ENCODE measurements at regions of chr2 and their contacts with region 1.

Region 1: GRCh38 chr2:68196120-68196716 is 38.5 kb downstream of the PNO1 start:
- DNase-seq: peak; percentile 52
- H3K4me3 Mint-ChIP-seq: no peak overlapping the region
- H3K27ac Mint-ChIP-seq: no peak overlapping the region
- H3K4me1 Mint-ChIP-seq: peaks cover 51% of the 10 kb centered on the region
- H3K27me3 Mint-ChIP-seq: no peaks in the 10 kb centered on the region

Region 2: GRCh38 chr2:66515743-66516142 is 1680.5 kb before region 1 on chr2:
- CTCF ChIA-PET with region 1: no interaction called
- intact Hi-C with region 1: no loop called
- DNase-seq: no peak
- H3K4me3 Mint-ChIP-seq: no peak overlapping the region
- H3K27ac Mint-ChIP-seq: no peak overlapping the region
- H3K4me1 Mint-ChIP-seq: no peaks in the 10 kb centered on the region
- H3K27me3 Mint-ChIP-seq: no peaks in the 10 kb centered on the region

Region 3: GRCh38 chr2:68185541-68186164 is 10.6 kb before region 1 on chr2:
- CTCF ChIA-PET with region 1: interaction called, 20 read pairs
- intact Hi-C with region 1: no loop called
- DNase-seq: peak; percentile 67
- H3K4me3 Mint-ChIP-seq: no peak overlapping the region
- H3K27ac Mint-ChIP-seq: no peak overlapping the region
- H3K4me1 Mint-ChIP-seq: peaks cover 32% of the 10 kb centered on the region
- H3K27me3 Mint-ChIP-seq: no peaks in the 10 kb centered on the region

Region 4: GRCh38 chr2:68225119-68225632 is 29.0 kb after region 1 on chr2:
- CTCF ChIA-PET with region 1: interaction called, 8 read pairs
- intact Hi-C with region 1: loop called (anchors 2 kb)
- DNase-seq: peak; percentile 28
- H3K4me3 Mint-ChIP-seq: no peak overlapping the region
- H3K27ac Mint-ChIP-seq: no peak overlapping the region
- H3K4me1 Mint-ChIP-seq: peaks cover 81% of the 10 kb centered on the region
- H3K27me3 Mint-ChIP-seq: no peaks in the 10 kb centered on the region

Region 5: DNA sequence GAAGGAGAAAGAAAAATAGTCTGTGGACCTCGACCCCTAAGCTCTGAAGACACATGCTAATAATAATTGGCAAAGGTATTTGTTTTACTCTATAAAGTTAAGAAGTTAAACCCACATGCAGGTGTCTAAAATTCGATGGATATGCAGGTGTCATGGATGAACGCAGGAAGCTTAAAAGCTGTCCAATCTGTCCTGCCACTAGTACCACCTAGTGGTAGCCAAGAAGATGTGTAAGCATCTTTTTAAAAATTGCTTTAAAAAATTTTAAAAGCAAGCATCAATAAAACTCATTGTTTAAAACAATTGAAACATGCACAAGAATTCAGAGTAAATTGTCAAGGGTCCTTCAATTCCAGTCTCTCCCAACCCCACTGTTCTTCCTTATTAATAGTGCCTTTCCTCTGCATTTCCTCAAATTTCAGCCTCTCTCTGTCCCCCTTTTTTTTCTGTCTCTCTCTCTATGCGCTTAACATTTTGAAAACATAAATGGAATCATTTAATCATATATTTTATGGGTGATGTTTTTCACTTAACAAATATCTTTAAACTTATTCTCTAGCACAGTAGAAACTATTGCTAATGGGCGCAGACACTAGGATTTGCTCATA is 86.7 kb after region 1 on chr2:
- CTCF ChIA-PET with region 1: interaction called, 16 read pairs
- intact Hi-C with region 1: loop called (anchors 1 kb)
- DNase-seq: peak; percentile 18
- H3K4me3 Mint-ChIP-seq: no peak overlapping the region
- H3K27ac Mint-ChIP-seq: no peak overlapping the region
- H3K4me1 Mint-ChIP-seq: no peaks in the 10 kb centered on the region
- H3K27me3 Mint-ChIP-seq: peaks cover 2% of the 10 kb centered on the region

Region 6: DNA sequence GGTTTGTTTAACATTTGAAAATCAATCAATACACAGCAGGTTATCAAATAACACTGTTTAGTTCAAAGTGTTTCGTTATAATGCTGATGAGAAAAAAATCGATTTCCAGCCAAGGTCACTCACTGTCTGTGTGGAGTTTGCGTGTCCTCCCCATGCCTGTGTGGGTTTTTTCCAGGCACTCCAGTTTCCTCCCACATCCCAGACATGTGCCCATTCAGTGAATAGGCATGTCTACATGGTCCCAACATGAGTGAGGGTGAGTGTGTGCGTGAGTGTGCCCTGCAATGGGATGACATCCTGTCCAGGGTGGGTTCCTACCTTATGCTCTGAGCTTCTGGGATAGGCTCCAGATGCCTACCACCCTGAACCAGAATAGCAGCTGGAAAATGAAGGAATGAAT is 765.2 kb after region 1 on chr2:
- CTCF ChIA-PET with region 1: interaction called, 10 read pairs
- intact Hi-C with region 1: no loop called
- DNase-seq: no peak
- H3K4me3 Mint-ChIP-seq: no peak overlapping the region
- H3K27ac Mint-ChIP-seq: no peak overlapping the region
- H3K4me1 Mint-ChIP-seq: no peaks in the 10 kb centered on the region
- H3K27me3 Mint-ChIP-seq: peaks cover 11% of the 10 kb centered on the region

Measured in activated naive CD4-positive, alpha-beta T cell treated with anti-CD3 and anti-CD28 coated beads for 36 hours (primary cell).